ENCODE measurements at regions of chr21 and their contacts with region 1.

Region 1: DNA sequence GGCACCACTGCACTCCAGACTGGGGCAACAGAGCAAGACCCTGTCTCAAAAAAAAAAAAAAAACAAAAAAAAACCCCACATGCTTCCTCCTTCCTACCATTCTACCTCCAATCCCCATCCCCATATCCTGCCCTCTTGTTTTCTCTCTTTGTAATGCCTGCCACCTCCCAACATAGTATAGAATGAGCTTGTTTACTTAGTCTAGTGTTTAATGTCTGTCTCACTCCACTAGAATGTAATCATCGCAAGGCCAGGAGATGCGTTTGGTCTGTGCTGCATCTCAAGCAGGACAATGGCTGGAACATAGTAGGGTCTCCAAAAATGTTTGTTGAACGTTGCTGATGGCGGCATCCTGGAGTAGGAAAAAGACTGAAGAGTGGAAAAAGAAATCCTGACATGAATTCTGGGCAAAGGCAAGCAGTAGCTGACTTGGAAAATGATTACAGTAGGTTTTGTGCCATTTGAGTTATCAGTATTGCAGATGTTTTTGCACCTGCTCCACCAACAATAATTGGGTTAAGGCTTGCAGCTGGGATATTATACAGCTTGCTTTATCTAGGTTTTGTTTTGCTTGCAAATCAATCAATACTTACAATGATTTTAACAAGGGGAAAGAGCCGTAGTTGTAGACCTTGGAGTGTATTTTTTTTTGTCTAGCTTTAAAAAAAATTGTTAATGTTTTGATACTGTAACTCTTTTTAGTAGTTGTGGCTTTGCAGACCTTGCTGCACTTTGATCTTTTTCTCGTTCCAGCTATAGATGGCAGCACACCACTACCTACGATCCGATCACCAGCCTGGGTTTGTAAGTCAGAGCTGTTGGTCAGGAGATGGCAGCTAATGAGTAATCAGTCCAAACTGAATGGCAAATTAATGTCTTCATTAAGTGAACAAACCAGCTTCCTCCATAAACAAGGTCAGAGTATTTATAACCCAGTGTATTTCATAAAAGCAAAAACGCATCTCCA is 62.4 kb downstream of the BACH1 start:
- DNase-seq: no peak
- H3K4me3 ChIP-seq: no peak overlapping the region
- CTCF ChIP-seq: no peak

Region 2: GRCh38 chr21:29372063-29372802 is 11.2 kb after region 1 on chr21:
- CTCF ChIA-PET with region 1: interaction called, 24 read pairs
- POLR2A ChIA-PET with region 1: no interaction called
- DNase-seq: no peak
- H3K4me3 ChIP-seq: no peak overlapping the region
- CTCF ChIP-seq: peak; percentile 62

Region 3: GRCh38 chr21:29849735-29850176 is 488.7 kb after region 1 on chr21:
- CTCF ChIA-PET with region 1: interaction called, 12 read pairs
- POLR2A ChIA-PET with region 1: no interaction called
- DNase-seq: peak; percentile 4
- H3K4me3 ChIP-seq: no peak overlapping the region
- CTCF ChIP-seq: peak; percentile 85

Measured in AG04449 (cell line).